Gastrocnemius medialis (tissue), 4 donors: ENCODE measurements at regions of chr2 and their contacts with region 1.

Region 1: GRCh38 chr2:86195055-86195807 is at the start of gene IMMT:
- DNase-seq: peak; percentile 93 to 95
- ATAC-seq: peak; percentile 79 to 85
- H3K4me3 ChIP-seq: peak within 1 kb of the TSS; percentile 80 to 99 (median 88)
- H3K27ac ChIP-seq: peak within 1 kb of the TSS; percentile 95 to 100 (median 98)
- H3K4me1 ChIP-seq: peaks cover 51 to 54% of the 10 kb centered on the region in 2 donors
- H3K27me3 ChIP-seq: no peaks in the 10 kb centered on the region
- CTCF ChIP-seq: peak in 3 of 5 experiments; percentile 1 to 31 (median 21)
- POLR2A ChIP-seq: peak; percentile 90 to 93
- total RNA-seq, gene IMMT: 83.5 to 153 (median 127) TPM

Region 2: DNA sequence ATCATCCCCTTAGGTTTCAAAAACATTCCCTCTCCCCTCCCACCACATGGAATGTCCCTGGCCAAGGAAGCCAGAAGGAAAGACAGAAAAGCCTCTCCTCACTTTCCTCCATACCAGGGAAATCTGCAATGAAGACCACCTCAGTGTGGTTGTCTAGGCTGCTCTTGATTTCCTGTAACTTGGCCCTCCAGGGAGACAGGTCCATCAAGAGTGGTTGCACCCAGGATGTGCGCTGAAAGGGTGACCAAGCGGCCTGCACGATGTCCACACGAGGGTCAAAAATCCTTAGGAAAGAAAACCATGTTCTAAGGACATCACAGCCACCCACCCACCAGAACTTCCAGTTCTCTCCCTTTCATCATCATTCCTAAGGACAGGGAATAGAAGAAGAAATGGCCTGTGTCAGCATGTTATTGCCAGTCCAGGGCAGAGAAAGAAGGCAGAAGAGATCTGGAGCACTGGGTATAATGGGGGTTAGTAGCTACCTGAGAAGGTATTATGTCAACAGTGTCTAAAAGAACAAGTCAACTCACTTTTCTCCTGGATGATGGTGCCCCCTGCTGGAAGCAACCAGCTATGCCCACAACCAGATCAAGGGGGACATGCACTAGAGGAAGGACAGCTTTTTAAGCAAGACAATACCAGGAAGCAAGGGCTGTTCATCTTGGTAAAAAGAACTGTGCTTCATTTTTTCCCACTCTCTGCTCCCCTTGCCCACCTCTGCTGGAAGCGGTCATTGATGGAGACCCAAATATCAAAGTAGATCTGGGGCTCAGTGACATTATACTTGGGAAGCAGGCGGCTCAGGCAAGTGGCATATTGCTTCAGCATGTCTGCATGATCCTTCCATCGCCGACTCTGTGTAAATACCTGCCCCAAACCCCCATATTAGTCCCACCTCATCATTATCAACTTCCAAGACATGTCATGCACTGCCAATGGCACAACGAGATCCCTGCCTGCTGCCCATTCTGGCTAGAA is 643.2 kb before region 1 on chr2:
- in situ Hi-C with region 1: no loop called
- intact Hi-C with region 1: no loop called
- DNase-seq: peak; percentile 71 to 85
- ATAC-seq: peak; percentile 67 to 89
- H3K4me3 ChIP-seq: no peak overlapping the region
- H3K27ac ChIP-seq: peak overlapping the region; percentile 53 to 99 (median 64)
- H3K4me1 ChIP-seq: peaks cover 5 to 13% of the 10 kb centered on the region in 2 donors
- H3K27me3 ChIP-seq: no peaks in the 10 kb centered on the region
- CTCF ChIP-seq: peak; percentile 90 to 96 (median 92)
- POLR2A ChIP-seq: peak in 1 of 2 donors; percentile 12

Region 3: DNA sequence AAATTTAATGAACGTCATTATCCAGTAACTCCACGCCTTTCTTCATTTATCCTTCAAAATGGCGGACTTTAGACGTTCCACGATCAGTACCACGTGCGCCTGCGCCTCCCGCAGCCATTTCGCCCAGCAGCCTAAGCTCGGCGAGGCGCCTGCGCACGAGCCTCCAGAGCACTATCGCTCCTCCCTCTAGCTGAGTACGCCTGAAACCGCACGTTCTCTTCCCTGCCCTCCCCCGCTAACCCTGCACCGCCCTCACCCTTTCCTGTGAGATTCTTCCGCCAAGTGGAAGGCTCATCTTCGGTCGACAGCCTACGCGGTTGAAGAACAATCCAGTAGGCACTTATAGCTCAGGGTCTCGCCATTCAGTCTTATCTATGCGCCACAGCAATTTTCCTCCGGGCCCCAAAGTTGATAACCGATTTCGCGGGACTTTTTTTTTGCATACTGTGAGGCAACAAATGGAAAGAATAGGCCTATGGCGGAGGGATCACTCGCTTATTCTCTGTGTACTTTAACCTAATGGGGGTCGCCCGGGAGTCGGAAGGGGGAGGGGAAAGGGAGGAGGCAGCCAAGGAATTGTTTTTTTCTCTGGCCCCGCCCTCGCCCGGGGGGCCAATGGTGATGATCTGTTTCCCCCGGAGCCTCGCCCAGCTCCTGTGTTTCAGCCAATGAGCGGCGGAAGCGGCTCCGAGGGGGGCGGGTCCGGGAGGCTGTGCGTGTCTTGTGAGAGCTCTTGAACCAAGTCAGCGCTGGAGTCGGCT is 245.6 kb after region 1 on chr2 and contains the start of gene KDM3A:
- in situ Hi-C with region 1: no loop called
- intact Hi-C with region 1: loop called (anchors 1 kb)
- DNase-seq: peak; percentile 99
- ATAC-seq: peak; percentile 84 to 86
- H3K4me3 ChIP-seq: peak within 1 kb of the TSS; percentile 74 to 81 (median 76)
- H3K27ac ChIP-seq: peak within 1 kb of the TSS; percentile 86 to 98 (median 91)
- H3K4me1 ChIP-seq: peaks cover 31 to 33% of the 10 kb centered on the region in 2 donors
- H3K27me3 ChIP-seq: no peaks in the 10 kb centered on the region
- CTCF ChIP-seq: peak in 1 of 5 experiments; percentile 5
- POLR2A ChIP-seq: no peak
- total RNA-seq, gene KDM3A: 20.7 to 36.8 (median 26.1) TPM